Right cardiac atrium (tissue), 5 donors: ENCODE measurements at regions of chr17 and their contacts with region 1.

Region 1: DNA sequence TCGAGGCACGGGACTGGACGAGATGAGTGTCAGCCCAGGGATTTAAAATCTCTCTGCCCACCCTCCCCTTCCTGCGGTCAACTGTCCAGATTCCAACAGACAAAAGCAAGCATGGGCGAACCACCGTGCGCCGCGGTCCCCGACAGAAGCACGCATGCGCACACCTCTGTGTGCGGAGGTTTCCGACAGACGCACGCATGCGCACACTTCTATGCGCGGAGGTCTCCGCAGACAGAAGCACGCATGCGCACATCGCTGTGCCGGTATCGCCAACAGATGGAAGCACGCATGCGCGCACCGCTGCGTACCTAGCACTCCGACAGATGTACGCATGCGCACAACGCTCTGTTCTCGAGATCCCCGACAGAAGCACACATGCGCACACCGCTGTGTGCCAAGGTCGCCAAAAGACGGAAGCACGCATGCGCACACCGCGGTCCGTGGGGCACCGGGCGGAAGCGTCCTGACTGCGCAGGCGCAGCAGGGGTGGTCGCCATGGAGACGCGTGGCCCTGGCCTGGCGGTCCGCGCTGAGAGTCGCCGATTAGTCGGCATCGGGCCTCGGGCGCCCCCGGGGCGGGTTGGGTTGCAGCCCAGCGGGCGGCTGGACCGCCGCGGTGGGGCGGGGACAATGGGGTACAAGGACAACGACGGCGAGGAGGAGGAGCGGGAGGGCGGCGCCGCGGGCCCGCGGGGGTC is 57.4 kb upstream of the RPH3AL start:
- DNase-seq: peak; percentile 100
- ATAC-seq: peak; percentile 93 to 94
- H3K4me3 ChIP-seq: peak overlapping the region; percentile 67
- H3K27ac ChIP-seq: peak overlapping the region; percentile 77
- H3K4me1 ChIP-seq: no peaks in the 10 kb centered on the region
- H3K27me3 ChIP-seq: no peaks in the 10 kb centered on the region

Region 2: GRCh38 chr17:700504-701094 is 290.6 kb after region 1 on chr17:
- intact Hi-C with region 1: loop called (anchors 5 kb)
- DNase-seq: no peak
- ATAC-seq: no peak
- H3K4me3 ChIP-seq: no peak overlapping the region
- H3K27ac ChIP-seq: no peak overlapping the region
- H3K4me1 ChIP-seq: no peaks in the 10 kb centered on the region
- H3K27me3 ChIP-seq: no peaks in the 10 kb centered on the region